ENCODE measurements at regions of chr17 and their contacts with region 1.

Region 1: GRCh38 chr17:64975329-64976087 is 56.2 kb upstream of the LRRC37A3 start:
- DNase-seq: peak; percentile 97 to 98 (median 98)
- ATAC-seq: peak; percentile 98
- H3K4me3 ChIP-seq: peak overlapping the region; percentile 43
- H3K4me1 ChIP-seq: peaks cover 10% of the 10 kb centered on the region
- CTCF ChIP-seq: no peak

Region 2: DNA sequence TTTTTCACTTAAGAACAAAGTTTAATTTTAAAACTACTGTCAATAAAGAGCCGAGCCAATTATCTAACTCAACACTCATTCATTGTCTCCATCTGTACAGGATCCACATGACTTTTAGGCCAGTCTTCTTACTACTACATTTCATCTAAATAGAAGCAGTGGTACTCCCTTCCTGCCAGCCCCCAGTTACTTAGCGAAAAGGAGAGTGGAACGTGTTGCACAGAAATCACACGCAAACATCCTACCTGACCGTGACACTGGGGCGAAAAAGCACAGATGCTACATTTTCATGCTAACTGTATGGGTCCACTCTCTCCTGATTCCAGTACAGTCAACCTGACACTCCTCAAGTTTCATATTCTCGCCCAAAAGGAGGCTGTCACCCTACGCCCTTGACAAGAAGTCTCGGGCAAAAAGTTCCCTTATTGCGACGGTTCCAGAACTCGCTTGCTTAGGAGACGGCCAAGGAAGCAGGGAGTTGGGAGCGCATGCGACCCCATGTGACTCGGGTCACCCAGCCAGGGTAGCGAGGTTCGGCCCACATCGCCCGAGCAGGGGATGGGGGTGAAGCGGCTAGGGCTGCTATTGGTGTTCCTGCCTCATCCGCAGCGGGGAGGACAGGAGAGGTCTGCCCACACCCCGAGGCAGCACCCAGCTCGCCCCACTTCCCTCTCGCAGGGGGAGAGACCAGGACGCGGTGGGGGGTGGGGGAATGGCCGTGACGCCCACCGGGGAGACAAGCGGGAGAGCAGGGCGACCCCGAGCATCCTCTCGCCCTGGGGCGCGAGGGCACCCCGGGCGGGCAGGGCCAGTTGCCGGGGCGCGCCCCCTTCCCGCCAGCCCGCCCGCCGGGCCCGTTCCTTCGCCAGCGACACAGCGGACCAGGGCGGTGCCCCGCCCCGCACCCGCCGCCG is 80.1 kb after region 1 on chr17:
- intact Hi-C with region 1: loop called in 1 of 2 experiments (anchors 10 kb)
- DNase-seq: peak; percentile 62 to 85 (median 79)
- ATAC-seq: peak; percentile 51
- H3K4me3 ChIP-seq: peak overlapping the region; percentile 83
- H3K4me1 ChIP-seq: peaks cover 9% of the 10 kb centered on the region
- CTCF ChIP-seq: no peak

Region 3: GRCh38 chr17:65219124-65219523 is 243.6 kb after region 1 on chr17:
- intact Hi-C with region 1: no loop called
- DNase-seq: no peak
- ATAC-seq: no peak
- H3K4me3 ChIP-seq: no peak overlapping the region
- H3K4me1 ChIP-seq: no peaks in the 10 kb centered on the region
- CTCF ChIP-seq: no peak

Region 4: DNA sequence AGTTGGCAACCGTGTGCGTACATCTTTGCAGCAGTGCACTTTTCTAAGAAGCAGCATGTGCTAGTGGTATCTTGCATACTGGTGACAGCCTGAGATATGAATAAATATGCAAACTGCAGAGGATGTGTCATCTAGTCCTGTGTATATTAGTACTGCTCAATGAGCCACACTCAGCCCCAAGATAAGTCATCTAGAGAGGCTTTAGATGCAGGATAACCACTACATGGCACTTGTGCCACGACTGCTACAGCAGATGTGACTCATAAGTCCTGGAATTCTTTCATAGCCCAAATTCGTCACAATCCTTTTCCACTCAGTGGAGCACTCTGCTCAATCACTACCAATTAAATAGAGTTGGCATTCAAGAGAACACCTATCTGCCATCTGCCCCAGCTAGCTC is 414.4 kb after region 1 on chr17:
- intact Hi-C with region 1: no loop called
- DNase-seq: no peak
- ATAC-seq: no peak
- H3K4me3 ChIP-seq: no peak overlapping the region
- H3K4me1 ChIP-seq: no peaks in the 10 kb centered on the region
- CTCF ChIP-seq: no peak